ENCODE measurements at regions of chr11 and their contacts with region 1.

Region 1: DNA sequence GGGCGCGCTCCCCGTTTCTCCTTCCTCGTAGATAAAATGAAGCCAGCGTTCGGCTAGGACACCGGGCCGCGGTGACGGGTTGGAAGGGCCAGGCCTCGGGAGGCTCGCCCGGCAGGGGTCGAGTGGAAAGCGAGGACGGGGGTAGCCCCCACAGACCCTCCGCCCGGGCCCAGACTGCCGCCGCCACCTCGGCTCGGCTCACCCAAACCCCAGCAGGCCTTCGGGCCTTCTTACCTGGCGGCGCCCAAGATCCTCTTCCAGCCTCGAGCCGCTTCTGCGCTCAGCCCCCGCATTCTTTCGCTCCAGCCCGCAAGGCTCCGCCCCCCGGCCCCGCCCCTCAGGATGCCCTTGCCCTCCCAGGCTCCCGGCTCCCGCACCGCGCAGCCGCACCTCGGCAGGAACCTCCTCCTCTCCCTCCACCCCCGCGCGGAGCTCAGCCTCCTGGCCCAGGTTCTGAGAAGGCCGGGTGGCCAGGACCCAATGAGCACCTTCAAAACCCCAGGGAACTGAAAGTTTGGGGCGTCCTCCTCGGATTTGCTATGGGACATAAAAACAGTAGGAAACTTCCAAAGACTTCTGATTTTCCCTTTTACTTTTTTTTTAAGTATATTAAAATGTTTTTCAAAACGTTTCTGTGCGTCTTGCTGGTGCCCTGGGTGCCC is at the start of gene CD59:
- DNase-seq: peak; percentile 95
- H3K4me3 Mint-ChIP-seq: peak within 1 kb of the TSS; percentile 78
- H3K27ac Mint-ChIP-seq: peak within 1 kb of the TSS; percentile 61
- H3K4me1 Mint-ChIP-seq: peaks cover 33% of the 10 kb centered on the region
- H3K27me3 Mint-ChIP-seq: no peaks in the 10 kb centered on the region
- total RNA-seq, gene CD59: 59.9 to 61.9 TPM

Region 2: DNA sequence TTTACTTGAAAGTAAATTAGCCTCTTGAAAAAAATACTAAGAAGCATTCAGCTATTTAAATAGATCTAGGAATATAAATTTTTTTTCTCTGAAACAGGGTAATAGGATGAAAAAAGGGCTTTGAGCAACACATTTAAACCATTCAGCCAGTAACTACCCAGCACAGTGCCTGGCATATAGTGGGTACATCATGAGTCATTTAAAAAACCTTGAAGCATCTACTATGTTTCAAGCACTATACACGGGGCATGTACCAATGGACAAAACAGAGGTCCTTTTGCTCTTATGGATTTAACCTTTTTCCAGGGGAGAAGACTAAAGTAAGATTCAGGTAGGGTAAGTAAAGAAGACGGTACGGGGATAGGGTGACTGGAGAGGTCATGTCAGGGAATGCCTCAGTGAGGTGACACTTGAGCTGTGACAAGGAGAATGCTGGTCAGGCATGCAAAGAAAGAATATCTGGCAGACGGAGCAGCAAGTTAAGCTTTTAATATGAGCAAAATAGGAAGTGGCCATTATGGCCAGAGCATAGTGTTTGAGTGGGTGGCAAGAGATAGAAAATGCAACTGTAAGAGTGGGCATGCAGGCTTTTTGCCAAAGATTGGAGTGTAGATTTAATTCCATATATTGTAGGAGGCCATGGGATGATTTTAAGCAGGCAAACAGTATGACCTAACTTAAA is 378.0 kb before region 1 on chr11:
- CTCF ChIA-PET with region 1: no interaction called
- intact Hi-C with region 1: no loop called
- DNase-seq: no peak
- H3K4me3 Mint-ChIP-seq: no peak overlapping the region
- H3K27ac Mint-ChIP-seq: no peak overlapping the region
- H3K4me1 Mint-ChIP-seq: no peaks in the 10 kb centered on the region
- H3K27me3 Mint-ChIP-seq: peaks cover 4% of the 10 kb centered on the region

Region 3: GRCh38 chr11:33700425-33701271 is 35.6 kb before region 1 on chr11 and contains the start of gene C11orf91:
- CTCF ChIA-PET with region 1: interaction called, 3 read pairs
- intact Hi-C with region 1: loop called (anchors 1 kb)
- DNase-seq: peak; percentile 94
- H3K4me3 Mint-ChIP-seq: peak within 1 kb of the TSS; percentile 85
- H3K27ac Mint-ChIP-seq: peak within 1 kb of the TSS; percentile 61
- H3K4me1 Mint-ChIP-seq: peaks cover 7% of the 10 kb centered on the region
- H3K27me3 Mint-ChIP-seq: peaks cover 8% of the 10 kb centered on the region
- total RNA-seq, gene C11orf91: not detected

Region 4: GRCh38 chr11:33716236-33716635 is 20.0 kb before region 1 on chr11:
- CTCF ChIA-PET with region 1: interaction called, 11 read pairs
- intact Hi-C with region 1: no loop called
- DNase-seq: peak; percentile 39
- H3K4me3 Mint-ChIP-seq: no peak overlapping the region
- H3K27ac Mint-ChIP-seq: no peak overlapping the region
- H3K4me1 Mint-ChIP-seq: peaks cover under 1% of the 10 kb centered on the region
- H3K27me3 Mint-ChIP-seq: no peaks in the 10 kb centered on the region

Region 5: DNA sequence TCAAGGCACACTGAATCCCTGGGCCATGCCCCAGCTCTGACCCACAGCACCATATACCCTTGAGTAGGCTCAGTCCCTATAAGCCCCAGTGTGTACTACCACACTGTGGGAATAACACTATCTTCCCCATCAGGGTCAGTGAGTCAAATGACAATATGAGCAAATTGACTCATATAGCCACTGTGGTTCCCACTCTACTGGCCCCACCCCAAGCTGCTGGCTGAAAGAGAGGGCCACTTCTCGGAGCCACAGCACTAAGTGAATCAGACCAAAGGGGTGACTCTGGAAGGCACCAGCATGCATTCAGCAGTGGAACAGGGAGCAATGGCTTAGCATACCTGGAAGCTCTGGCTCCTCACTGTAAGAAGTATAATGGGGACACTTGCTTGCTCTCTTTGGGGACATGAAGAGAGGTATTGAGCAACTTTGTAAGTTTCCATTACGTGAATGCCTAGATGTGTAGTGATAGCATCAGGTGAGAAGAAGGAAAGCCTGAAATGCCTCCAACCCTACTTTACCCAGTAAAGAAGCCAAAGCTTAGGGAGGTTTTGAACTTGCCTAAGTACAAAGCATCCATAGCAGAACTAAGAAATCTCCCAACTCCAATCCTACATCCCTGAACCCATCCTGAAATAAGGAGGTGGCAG is 13.6 kb before region 1 on chr11:
- CTCF ChIA-PET with region 1: interaction called, 13 read pairs
- intact Hi-C with region 1: loop called (anchors 1 kb)
- DNase-seq: peak; percentile 47
- H3K4me3 Mint-ChIP-seq: no peak overlapping the region
- H3K27ac Mint-ChIP-seq: peak overlapping the region; percentile 21
- H3K4me1 Mint-ChIP-seq: peaks cover 29% of the 10 kb centered on the region
- H3K27me3 Mint-ChIP-seq: no peaks in the 10 kb centered on the region

Region 6: DNA sequence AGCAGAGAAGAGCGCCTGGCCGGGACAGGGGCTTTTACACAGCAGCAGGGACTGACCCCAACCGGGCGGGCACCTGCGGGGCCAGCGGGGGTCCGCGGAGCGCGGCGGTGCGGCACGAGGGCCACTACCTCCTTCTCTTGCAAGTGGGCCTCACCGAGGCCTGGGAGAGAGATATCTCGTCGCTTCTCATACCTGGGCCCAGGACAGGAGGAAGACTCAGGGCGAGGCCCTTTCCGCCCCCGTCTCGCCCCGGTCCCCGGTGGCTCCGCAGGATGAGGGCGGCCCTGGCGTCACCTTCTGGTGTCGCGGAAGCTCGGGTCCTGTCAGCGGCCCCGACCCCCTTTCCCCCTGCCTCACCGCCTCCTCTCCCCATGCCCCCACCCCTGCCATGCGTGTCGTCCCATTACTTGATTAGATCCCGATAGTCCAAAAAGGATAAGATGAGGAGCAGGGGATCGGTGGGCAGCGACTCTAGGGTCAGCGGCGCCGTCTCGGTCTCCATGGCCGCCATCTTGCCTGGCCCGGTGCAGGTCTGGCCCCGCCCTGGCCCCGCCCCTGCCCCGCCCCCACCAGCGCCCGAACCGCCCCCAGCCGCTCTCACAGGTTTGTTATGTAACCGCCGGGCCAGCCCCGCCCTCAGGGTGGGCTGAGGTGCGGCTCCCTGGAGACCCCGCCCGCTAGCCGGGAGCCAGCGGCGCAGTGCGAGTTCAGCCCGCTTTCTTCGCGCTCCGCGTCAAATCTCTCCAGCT is 37.9 kb after region 1 on chr11 and contains the start of gene FBXO3:
- CTCF ChIA-PET with region 1: interaction called, 3 read pairs
- intact Hi-C with region 1: loop called (anchors 1 kb)
- DNase-seq: peak; percentile 82
- H3K4me3 Mint-ChIP-seq: peak within 1 kb of the TSS; percentile 90
- H3K27ac Mint-ChIP-seq: peak within 1 kb of the TSS; percentile 85
- H3K4me1 Mint-ChIP-seq: peaks cover 40% of the 10 kb centered on the region
- H3K27me3 Mint-ChIP-seq: peaks cover 12% of the 10 kb centered on the region
- total RNA-seq, gene FBXO3: 12.2 to 12.9 TPM

Region 7: GRCh38 chr11:33835143-33835878 is 99.0 kb after region 1 on chr11:
- CTCF ChIA-PET with region 1: no interaction called
- intact Hi-C with region 1: no loop called
- DNase-seq: no peak
- H3K4me3 Mint-ChIP-seq: no peak overlapping the region
- H3K27ac Mint-ChIP-seq: no peak overlapping the region
- H3K4me1 Mint-ChIP-seq: no peaks in the 10 kb centered on the region
- H3K27me3 Mint-ChIP-seq: peaks cover 20% of the 10 kb centered on the region

Region 8: GRCh38 chr11:34051349-34052035 is 315.2 kb after region 1 on chr11 and contains the start of gene CAPRIN1:
- CTCF ChIA-PET with region 1: no interaction called
- intact Hi-C with region 1: loop called (anchors 1 kb)
- DNase-seq: peak; percentile 86
- H3K4me3 Mint-ChIP-seq: peak within 1 kb of the TSS; percentile 96
- H3K27ac Mint-ChIP-seq: peak within 1 kb of the TSS; percentile 97
- H3K4me1 Mint-ChIP-seq: peaks cover 14% of the 10 kb centered on the region
- H3K27me3 Mint-ChIP-seq: no peaks in the 10 kb centered on the region
- total RNA-seq, gene CAPRIN1: 274 to 289 TPM

Region 9: DNA sequence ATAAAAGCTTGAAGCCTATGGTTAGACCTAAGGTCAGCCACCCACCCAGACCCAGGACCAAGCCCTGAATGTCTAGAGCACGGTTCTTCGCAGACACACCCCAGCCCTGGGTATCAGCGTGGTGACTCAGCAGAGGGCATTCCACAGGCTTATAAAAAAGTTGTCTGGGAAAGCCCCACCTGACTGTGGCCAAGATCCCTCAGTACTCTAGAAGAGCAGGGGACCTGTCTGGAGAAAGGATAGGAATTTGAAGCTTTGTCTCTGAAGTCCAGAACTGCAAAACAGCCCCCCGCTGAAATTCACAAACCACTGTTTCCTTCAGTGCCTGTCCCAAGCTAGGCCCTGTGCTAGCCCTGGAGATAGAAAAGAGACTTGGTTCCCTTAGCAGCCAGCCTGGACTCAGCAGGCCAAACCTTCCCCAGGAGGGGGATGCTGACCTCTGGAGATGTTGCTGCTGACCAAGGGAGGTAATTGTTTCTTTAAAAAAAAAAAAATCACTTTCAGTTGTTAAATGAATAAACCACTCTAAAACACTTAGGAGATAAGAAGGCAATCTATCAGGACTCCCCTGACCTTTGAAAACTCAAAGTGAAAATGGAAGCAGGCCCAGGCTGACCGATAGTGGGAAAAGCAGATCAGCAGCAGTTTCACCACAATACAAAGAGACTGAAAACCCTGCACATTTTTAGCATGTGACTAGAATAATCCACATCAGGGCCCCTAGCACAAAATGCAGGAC is 507.6 kb after region 1 on chr11:
- CTCF ChIA-PET with region 1: no interaction called
- intact Hi-C with region 1: loop called (anchors 10 kb)
- DNase-seq: peak; percentile 77
- H3K4me3 Mint-ChIP-seq: no peak overlapping the region
- H3K27ac Mint-ChIP-seq: peak overlapping the region; percentile 46
- H3K4me1 Mint-ChIP-seq: peaks cover 78% of the 10 kb centered on the region
- H3K27me3 Mint-ChIP-seq: peaks cover 2% of the 10 kb centered on the region